ENCODE measurements at regions of chr1 and their contacts with region 1.

Region 1: GRCh38 chr1:92858564-92859399 is 26.9 kb downstream of the RPL5 start:
- DNase-seq: peak in 30 of 35 experiments; percentile 3 to 87 (median 40)
- ATAC-seq: peak; percentile 88 to 93 (median 91)
- H3K4me3 ChIP-seq: no peak overlapping the region
- H3K4me3 Mint-ChIP-seq: peak overlapping the region; percentile 44 to 57 (median 49)
- H3K27ac ChIP-seq: no peak overlapping the region
- H3K27ac Mint-ChIP-seq: peak overlapping the region; percentile 59 to 82
- H3K4me1 ChIP-seq: peaks cover 7 to 8% of the 10 kb centered on the region in 2 experiments
- H3K4me1 Mint-ChIP-seq: peaks cover 20 to 27% (median 23%) of the 10 kb centered on the region in 3 donors
- H3K27me3 ChIP-seq: no peaks in the 10 kb centered on the region
- H3K27me3 Mint-ChIP-seq: no peaks in the 10 kb centered on the region

Region 2: DNA sequence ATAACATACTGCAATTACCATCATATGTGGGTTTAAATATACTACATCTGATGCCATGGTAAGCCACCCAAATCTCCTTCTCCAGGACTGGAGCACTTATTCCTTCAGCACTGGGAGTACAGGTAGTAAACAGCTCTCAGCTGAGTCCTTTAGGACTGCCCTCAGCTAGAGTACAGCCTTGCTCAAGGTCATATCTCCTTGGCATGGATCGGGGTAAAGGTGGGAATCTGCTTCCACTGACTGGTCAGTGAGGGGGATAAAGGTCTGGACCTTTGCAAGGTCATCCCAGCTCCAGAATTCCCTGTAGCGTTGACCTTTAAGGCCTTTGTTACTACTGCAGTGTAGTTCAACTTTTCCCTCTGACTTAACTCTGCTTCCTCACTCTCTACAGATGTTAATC is 11.8 kb after region 1 on chr1:
- CTCF ChIA-PET with region 1: interaction called, 4 to 16 read pairs
- POLR2A ChIA-PET with region 1: no interaction called
- DNase-seq: no peak
- ATAC-seq: no peak
- H3K4me3 ChIP-seq: no peak overlapping the region
- H3K4me3 Mint-ChIP-seq: no peak overlapping the region
- H3K27ac ChIP-seq: no peak overlapping the region
- H3K27ac Mint-ChIP-seq: peak overlapping the region in 1 of 2 donors; percentile 57
- H3K4me1 ChIP-seq: peaks cover 0 to 6% of the 10 kb centered on the region in 2 experiments
- H3K4me1 Mint-ChIP-seq: peaks cover 17 to 20% (median 20%) of the 10 kb centered on the region in 3 donors
- H3K27me3 ChIP-seq: no peaks in the 10 kb centered on the region
- H3K27me3 Mint-ChIP-seq: no peaks in the 10 kb centered on the region

Region 3: GRCh38 chr1:92877792-92878191 is 19.0 kb after region 1 on chr1:
- CTCF ChIA-PET with region 1: interaction called, 5 to 10 read pairs
- POLR2A ChIA-PET with region 1: interaction called in 1 of 2 experiments, 3 read pairs
- DNase-seq: peak in 1 of 35 experiments; percentile 48
- ATAC-seq: peak in 3 of 4 experiments; percentile 26 to 39 (median 33)
- H3K4me3 ChIP-seq: no peak overlapping the region
- H3K4me3 Mint-ChIP-seq: peak overlapping the region; percentile 6 to 53 (median 11)
- H3K27ac ChIP-seq: peak overlapping the region; percentile 43
- H3K27ac Mint-ChIP-seq: peak overlapping the region; percentile 71 to 89
- H3K4me1 ChIP-seq: peaks cover 11 to 31% of the 10 kb centered on the region in 2 experiments
- H3K4me1 Mint-ChIP-seq: peaks cover 36 to 41% (median 39%) of the 10 kb centered on the region in 3 donors
- H3K27me3 ChIP-seq: no peaks in the 10 kb centered on the region
- H3K27me3 Mint-ChIP-seq: no peaks in the 10 kb centered on the region

Region 4: DNA sequence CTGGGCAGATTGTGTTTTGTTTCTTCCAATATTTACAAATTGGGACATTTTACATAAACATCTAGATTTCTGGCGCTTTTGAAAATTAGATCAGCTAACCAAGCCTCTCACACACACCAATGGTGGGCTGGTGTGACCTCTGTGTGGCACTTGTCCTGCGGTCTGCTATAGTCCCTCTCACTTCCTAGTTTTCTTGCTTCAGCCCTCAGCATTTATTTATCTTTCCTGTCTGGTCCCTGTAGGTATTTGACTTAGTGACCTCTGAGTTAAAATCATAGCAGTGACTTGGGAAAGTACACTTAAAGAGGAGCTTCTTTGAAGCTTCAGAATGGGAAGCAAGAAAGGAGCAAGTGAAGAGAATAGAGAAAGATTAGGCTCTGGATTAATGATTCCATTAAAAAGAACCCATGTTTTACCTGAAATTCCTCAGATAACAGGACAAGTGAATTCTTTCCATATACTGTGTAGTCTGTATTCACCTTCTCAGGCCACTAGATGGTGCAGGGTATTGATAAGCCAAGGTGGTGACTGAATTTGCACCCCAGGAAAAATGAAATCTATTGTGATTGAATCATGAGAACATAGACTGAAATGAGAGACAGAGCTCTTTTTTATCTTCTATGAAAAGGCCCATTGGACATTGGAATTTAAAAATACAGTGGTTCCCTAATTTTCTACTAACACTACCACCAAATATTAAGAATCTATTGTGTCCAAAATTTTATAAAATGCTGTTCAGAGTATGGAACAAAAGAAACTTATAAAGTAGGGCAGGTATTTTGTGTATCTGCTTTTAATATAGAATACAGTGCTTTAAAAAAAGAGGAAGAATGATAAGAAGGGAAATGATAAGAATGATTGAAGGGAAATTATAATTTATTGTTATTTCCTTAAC is 109.6 kb after region 1 on chr1:
- CTCF ChIA-PET with region 1: interaction called, 6 to 73 read pairs
- POLR2A ChIA-PET with region 1: no interaction called
- DNase-seq: peak in 6 of 35 experiments; percentile 11 to 71 (median 28)
- ATAC-seq: peak in 3 of 4 experiments; percentile 35 to 43 (median 43)
- H3K4me3 ChIP-seq: no peak overlapping the region
- H3K4me3 Mint-ChIP-seq: no peak overlapping the region
- H3K27ac ChIP-seq: no peak overlapping the region
- H3K27ac Mint-ChIP-seq: peak overlapping the region; percentile 29 to 66
- H3K4me1 ChIP-seq: peaks cover 38 to 48% of the 10 kb centered on the region in 2 experiments
- H3K4me1 Mint-ChIP-seq: peaks cover 25 to 36% (median 26%) of the 10 kb centered on the region in 3 donors
- H3K27me3 ChIP-seq: no peaks in the 10 kb centered on the region
- H3K27me3 Mint-ChIP-seq: no peaks in the 10 kb centered on the region

Region 5: GRCh38 chr1:92980732-92981647 is 122.2 kb after region 1 on chr1:
- CTCF ChIA-PET with region 1: interaction called, 5 to 11 read pairs
- POLR2A ChIA-PET with region 1: no interaction called
- DNase-seq: peak in 33 of 35 experiments; percentile 35 to 90 (median 68)
- ATAC-seq: peak; percentile 90 to 98 (median 94)
- H3K4me3 ChIP-seq: peak overlapping the region in 1 of 2 donors; percentile 6
- H3K4me3 Mint-ChIP-seq: peak overlapping the region; percentile 25 to 63 (median 58)
- H3K27ac ChIP-seq: peak overlapping the region; percentile 94
- H3K27ac Mint-ChIP-seq: peak overlapping the region; percentile 96 to 100
- H3K4me1 ChIP-seq: peaks cover 9 to 29% of the 10 kb centered on the region in 2 experiments
- H3K4me1 Mint-ChIP-seq: peaks cover 38 to 47% (median 46%) of the 10 kb centered on the region in 3 donors
- H3K27me3 ChIP-seq: no peaks in the 10 kb centered on the region
- H3K27me3 Mint-ChIP-seq: no peaks in the 10 kb centered on the region

Region 6: GRCh38 chr1:94154989-94155388 is 1296.2 kb after region 1 on chr1:
- CTCF ChIA-PET with region 1: no interaction called
- POLR2A ChIA-PET with region 1: no interaction called
- DNase-seq: no peak
- ATAC-seq: no peak
- H3K4me3 ChIP-seq: no peak overlapping the region
- H3K4me3 Mint-ChIP-seq: no peak overlapping the region
- H3K27ac ChIP-seq: no peak overlapping the region
- H3K27ac Mint-ChIP-seq: no peak overlapping the region
- H3K4me1 ChIP-seq: no peaks in the 10 kb centered on the region
- H3K4me1 Mint-ChIP-seq: no peaks in the 10 kb centered on the region
- H3K27me3 ChIP-seq: peaks cover 0 to 2% of the 10 kb centered on the region in 2 experiments
- H3K27me3 Mint-ChIP-seq: peaks cover 0 to 3% of the 10 kb centered on the region in 2 donors